Activated CD4-positive, alpha-beta T cell treated with anti-CD3 and anti-CD28 coated beads, Interleukin-2, amount 10 ng/mL, durations not matched to agents 7 days and 5 days (primary cell): ENCODE measurements at regions of chr15 and their contacts with region 1.

Region 1: GRCh38 chr15:29090617-29091466 is 178.8 kb downstream of the NSMCE3 start:
- DNase-seq: peak; percentile 57
- H3K4me3 Mint-ChIP-seq: peak overlapping the region; percentile 43
- H3K27ac Mint-ChIP-seq: peak overlapping the region; percentile 90
- H3K4me1 Mint-ChIP-seq: peaks cover 27% of the 10 kb centered on the region
- H3K27me3 Mint-ChIP-seq: no peaks in the 10 kb centered on the region

Region 2: DNA sequence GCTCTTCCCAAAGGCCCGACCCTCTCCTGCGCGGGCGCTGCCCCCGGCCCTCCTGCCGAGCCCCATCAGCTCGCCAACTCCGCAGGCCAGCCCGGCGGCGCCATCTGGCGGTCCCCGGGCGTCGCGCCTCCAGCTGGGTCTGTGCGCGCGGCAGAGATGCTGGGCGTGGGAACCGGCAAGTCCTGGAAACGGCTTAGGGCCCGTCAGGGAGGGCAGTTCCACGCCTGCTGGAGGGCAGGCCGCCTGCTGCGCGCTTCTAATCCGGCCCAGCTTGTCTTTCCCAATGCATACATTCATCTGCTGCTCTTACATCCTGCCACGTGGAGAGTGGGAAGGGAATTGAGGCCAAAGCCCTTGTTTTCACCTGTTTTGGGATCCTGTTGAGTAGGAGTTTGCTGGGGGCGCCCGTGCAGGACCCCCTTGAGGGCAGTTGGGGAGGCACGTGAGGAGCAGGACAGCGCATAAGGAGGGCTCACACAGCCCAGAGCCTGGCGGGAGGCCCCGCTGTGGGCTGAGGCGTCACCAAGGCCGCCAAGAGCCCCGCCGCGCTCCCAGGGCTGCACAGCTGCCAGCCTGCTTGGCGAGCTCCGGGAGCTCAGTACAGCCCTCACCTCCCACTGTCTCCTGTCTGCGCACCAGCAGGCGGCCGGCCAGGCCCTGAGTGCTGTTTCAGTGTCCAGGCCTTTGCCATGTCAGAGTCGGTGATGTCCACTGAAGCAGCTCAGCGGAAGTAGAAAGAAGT is 13.2 kb after region 1 on chr15:
- CTCF ChIA-PET with region 1: interaction called, 11 read pairs
- POLR2A ChIA-PET with region 1: no interaction called
- DNase-seq: peak; percentile 43
- H3K4me3 Mint-ChIP-seq: no peak overlapping the region
- H3K27ac Mint-ChIP-seq: no peak overlapping the region
- H3K4me1 Mint-ChIP-seq: no peaks in the 10 kb centered on the region
- H3K27me3 Mint-ChIP-seq: no peaks in the 10 kb centered on the region